ENCODE measurements at regions of chr16 and their contacts with region 1.

Region 1: GRCh38 chr16:56776562-56776961 is 46.6 kb downstream of the NUP93 start:
- DNase-seq: no peak
- ATAC-seq: no peak

Region 2: DNA sequence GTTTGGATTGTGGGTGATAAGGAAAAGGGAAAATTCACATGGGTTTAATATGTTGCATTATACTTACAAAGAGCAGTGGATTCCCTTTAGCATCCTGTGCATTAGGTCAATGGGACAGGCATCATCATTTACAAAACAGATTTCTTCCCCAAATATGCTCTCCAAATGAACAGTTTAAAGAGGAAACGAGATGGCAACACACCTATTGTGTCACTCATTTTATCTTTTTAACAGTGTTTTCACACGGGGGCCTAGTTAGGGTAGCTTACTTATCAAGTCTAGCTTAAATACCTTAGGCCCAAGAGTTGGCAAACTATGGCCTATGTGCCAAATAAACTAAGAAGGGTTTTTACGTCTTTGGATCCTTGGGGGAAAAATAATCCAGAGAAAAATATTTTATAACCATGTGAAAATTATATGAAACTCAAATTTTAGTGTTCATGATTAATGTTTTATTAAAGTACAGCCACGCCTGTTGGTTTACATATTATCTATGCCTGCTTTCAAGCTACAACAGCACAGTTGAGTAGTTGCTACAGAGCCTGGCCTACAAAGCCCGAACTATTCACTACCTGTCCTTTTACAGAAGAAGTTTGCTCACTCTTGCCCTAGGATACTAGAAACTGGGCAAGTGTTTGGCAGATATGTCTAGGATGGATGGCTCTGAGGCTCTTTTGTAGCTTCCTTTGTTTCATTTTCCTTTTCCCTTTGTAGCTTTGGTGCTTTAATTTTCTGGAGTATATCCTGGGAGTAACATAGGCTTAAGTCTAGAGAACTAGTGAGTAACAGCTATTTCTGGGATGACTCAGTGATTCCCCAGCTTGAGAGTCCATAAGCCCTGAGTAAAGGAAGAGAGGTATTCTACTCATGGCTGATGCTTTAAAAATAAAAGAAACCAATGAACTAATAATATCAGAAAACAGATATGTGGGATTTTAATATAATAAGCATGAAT is 34.3 kb before region 1 on chr16:
- intact Hi-C with region 1: loop called (anchors 5 kb)
- DNase-seq: no peak
- ATAC-seq: no peak